Activated CD8-positive, alpha-beta T cell treated with anti-CD3 and anti-CD28 coated beads, Interleukin-2, amount 10 ng/mL, durations not matched to agents 7 days and 5 days (primary cell): ENCODE measurements at regions of chr1 and their contacts with region 1.

Region 1: DNA sequence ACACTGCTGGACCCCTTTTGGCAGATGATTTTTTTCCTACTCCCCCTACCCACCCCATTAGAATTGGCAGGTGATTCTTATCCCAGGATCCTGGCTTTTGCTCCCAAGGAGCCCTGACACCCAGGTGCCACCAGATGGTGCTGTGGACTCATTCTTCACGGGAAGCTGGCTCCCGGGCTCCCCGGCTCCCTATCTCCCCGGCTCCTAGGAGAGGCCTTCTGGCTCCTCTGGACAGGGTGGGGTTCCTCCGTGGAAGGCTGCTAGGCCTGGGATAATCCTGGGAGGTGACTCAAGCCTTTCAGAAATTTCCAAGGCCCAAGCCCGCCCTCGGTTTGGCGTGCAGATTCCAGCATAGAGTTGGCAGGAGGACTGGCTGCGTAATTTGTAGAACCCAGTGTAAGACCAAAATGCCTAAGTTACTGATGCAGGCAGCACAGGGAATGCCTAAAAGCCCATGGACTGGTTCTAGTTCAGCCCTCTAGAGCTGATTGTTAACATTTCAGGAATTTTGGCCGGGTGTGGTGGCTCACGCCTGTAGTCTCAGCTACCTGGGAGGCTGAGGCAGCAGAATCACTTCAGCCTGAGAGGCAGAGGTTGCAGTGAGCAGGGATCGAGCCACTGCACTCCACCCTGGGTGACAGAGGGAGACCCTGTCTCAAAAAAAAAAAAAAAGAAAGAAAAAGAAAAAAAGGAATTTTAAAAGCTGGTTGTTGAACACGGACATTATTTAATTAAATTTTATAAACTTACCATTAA is 6.8 kb upstream of the BSDC1 start:
- DNase-seq: peak; percentile 63
- ATAC-seq: peak; percentile 90
- H3K4me3 Mint-ChIP-seq: no peak overlapping the region
- H3K27ac Mint-ChIP-seq: no peak overlapping the region
- H3K4me1 Mint-ChIP-seq: peaks cover 1% of the 10 kb centered on the region
- H3K27me3 Mint-ChIP-seq: peaks cover 4% of the 10 kb centered on the region

Region 2: GRCh38 chr1:32413507-32414185 is 12.6 kb after region 1 on chr1:
- CTCF ChIA-PET with region 1: interaction called, 40 read pairs
- POLR2A ChIA-PET with region 1: no interaction called
- DNase-seq: peak; percentile 85
- ATAC-seq: peak; percentile 84
- H3K4me3 Mint-ChIP-seq: no peak overlapping the region
- H3K27ac Mint-ChIP-seq: peak overlapping the region; percentile 0
- H3K4me1 Mint-ChIP-seq: peaks cover 3% of the 10 kb centered on the region
- H3K27me3 Mint-ChIP-seq: peaks cover 32% of the 10 kb centered on the region